ENCODE measurements at regions of chr3 and their contacts with region 1.

Region 1: GRCh38 chr3:141370065-141370533 is 1.8 kb downstream of the ZBTB38 start:
- DNase-seq: peak; percentile 93 to 96 (median 96)
- H3K4me3 ChIP-seq: no peak overlapping the region
- H3K27ac ChIP-seq: peak overlapping the region in 1 of 2 experiments; percentile 64
- H3K4me1 ChIP-seq: peaks cover 0 to 18% (median 8%) of the 10 kb centered on the region in 4 experiments
- H3K27me3 ChIP-seq: no peaks in the 10 kb centered on the region

Region 2: DNA sequence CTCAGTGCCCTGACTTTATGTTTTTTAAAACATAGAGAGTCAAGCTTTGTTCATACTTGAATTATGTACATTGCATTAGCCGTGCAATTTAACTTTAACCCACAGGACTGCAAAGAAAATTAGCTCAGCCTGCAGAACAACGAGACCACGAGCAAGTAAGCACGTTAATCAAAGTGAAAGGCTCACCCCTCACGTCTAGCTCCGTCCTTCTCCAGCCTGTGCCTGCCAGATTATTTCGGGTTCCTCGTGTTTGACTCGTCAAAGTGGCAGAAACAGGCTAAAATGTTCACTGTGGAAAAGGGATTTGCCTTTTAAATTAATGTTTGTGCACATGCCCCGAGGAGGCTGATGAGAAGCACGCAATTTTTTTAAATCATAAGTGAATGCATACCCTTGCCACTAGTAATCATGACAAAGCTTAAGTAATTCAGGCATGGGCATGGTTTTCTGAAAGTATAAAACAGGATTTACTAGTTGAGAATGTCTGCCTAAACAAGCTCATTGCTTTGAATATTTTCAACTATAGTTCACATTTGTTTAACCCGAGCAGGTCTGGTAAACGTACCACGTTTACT is 13.5 kb after region 1 on chr3:
- CTCF ChIA-PET with region 1: interaction called, 19 read pairs
- POLR2A ChIA-PET with region 1: no interaction called
- DNase-seq: no peak
- H3K4me3 ChIP-seq: peak overlapping the region in 3 of 7 experiments; percentile 34 to 54 (median 50)
- H3K27ac ChIP-seq: no peak overlapping the region
- H3K4me1 ChIP-seq: peaks cover 0 to 4% (median 0%) of the 10 kb centered on the region in 4 experiments
- H3K27me3 ChIP-seq: no peaks in the 10 kb centered on the region

Region 3: GRCh38 chr3:141400073-141400971 is 30.2 kb after region 1 on chr3:
- CTCF ChIA-PET with region 1: no interaction called
- POLR2A ChIA-PET with region 1: no interaction called
- DNase-seq: no peak
- H3K4me3 ChIP-seq: no peak overlapping the region
- H3K27ac ChIP-seq: no peak overlapping the region
- H3K4me1 ChIP-seq: peaks cover 5 to 21% (median 11%) of the 10 kb centered on the region in 4 experiments
- H3K27me3 ChIP-seq: no peaks in the 10 kb centered on the region

Region 4: DNA sequence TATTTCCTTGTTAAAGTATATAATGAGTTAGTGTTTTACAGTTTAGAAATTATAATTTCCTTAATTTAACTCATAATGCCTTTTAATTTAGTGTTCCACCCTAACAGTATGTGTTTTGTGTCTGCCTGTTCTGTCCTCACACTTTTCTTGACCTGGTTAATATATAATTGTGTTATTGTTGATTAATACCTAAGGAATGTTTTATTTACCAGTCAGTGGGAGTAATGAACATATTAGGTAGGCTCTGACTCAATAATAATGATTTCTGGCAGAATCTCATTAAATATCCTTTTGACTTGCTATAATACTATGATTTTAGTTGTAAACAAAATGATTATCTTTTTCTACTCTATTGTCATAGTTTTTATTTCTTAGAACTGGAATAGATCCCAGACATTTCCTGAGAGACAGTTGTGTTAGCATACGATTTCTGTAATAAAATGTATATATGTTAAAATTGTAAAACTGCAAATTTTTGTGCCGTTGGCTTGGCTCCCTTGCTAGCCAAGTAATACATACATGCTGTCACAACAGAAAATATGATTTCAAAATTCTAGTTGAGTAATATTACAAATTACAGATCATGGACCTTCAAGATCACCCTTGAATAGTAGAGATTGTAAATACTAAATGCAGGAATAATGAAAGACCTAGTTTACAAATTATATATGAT is 168.6 kb after region 1 on chr3:
- CTCF ChIA-PET with region 1: no interaction called
- POLR2A ChIA-PET with region 1: no interaction called
- DNase-seq: no peak
- H3K4me3 ChIP-seq: no peak overlapping the region
- H3K27ac ChIP-seq: no peak overlapping the region
- H3K4me1 ChIP-seq: no peaks in the 10 kb centered on the region
- H3K27me3 ChIP-seq: no peaks in the 10 kb centered on the region

Region 5: DNA sequence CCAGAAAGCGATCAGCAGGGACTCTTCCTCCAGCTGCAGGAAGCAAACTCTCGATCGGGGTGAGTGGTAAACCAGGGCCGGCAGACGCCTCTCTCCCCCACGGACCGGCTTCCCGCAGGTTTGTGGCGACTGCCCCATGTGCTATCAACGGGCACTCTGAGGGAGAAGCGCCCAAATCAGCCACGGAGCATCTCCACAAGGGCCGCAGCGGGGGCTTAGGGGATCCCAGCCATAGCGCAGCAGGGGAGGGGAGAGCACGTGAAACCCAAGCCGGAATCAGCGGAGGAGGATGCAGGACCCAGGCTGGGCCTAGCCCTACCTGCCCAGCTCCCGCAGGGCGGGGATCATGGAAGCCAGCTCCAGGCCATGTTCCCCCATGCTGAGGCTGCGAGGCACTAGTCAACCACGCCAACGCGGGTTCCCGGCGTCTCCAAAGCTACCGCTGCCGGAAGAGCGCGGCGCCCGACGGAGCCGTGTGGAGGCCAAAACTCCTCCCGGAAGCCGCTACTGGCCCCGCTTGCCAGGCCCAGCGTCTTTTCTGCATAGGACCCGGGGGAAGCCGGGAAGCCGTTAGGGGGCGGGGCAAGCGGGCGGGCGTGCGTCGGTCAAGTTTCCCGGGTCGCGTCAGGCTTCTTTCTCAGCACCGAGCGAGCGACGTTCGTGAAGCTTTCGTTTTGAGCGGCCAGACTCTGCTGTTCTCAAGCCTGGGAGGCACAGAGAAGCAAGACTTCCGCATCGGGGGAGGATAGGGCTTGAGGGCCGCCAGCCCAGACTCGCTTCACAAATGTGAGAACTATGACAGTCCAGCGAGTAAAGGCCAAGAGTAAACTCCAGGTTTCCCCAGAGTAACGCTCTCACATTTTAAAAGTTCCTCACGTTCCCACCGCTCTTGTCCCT is 1208.5 kb after region 1 on chr3 and contains the start of gene ATR:
- CTCF ChIA-PET with region 1: no interaction called
- POLR2A ChIA-PET with region 1: no interaction called
- DNase-seq: peak; percentile 95 to 98 (median 97)
- H3K4me3 ChIP-seq: peak within 1 kb of the TSS; percentile 85 to 97 (median 92)
- H3K27ac ChIP-seq: peak within 1 kb of the TSS; percentile 87 to 96
- H3K4me1 ChIP-seq: peaks cover 8 to 36% (median 21%) of the 10 kb centered on the region in 4 experiments
- H3K27me3 ChIP-seq: no peaks in the 10 kb centered on the region